Esophagus muscularis mucosa (tissue), 4 donors: ENCODE measurements at regions of chr1 and their contacts with region 1.

Region 1: GRCh38 chr1:9494929-9495758 is 44.1 kb upstream of the SLC25A33 start:
- DNase-seq: no peak
- H3K4me3 ChIP-seq: peak overlapping the region; percentile 40 to 55 (median 44)
- H3K27ac ChIP-seq: no peak overlapping the region
- H3K4me1 ChIP-seq: peaks cover 6 to 14% (median 9%) of the 10 kb centered on the region in 4 donors
- H3K27me3 ChIP-seq: no peaks in the 10 kb centered on the region
- CTCF ChIP-seq: peak; percentile 95 to 99 (median 99)
- EP300 ChIP-seq: no peak
- POLR2A ChIP-seq: no peak

Region 2: GRCh38 chr1:9267352-9267686 is 227.8 kb before region 1 on chr1:
- intact Hi-C with region 1: loop called (anchors 1 kb)
- DNase-seq: no peak
- H3K4me3 ChIP-seq: no peak overlapping the region
- H3K27ac ChIP-seq: peak overlapping the region; percentile 55 to 78 (median 65)
- H3K4me1 ChIP-seq: peaks cover 23 to 32% (median 30%) of the 10 kb centered on the region in 4 donors
- H3K27me3 ChIP-seq: no peaks in the 10 kb centered on the region
- CTCF ChIP-seq: no peak
- EP300 ChIP-seq: no peak
- POLR2A ChIP-seq: no peak

Region 3: GRCh38 chr1:9573723-9574122 is 78.6 kb after region 1 on chr1:
- intact Hi-C with region 1: loop called (anchors 1 kb)
- DNase-seq: no peak
- H3K4me3 ChIP-seq: no peak overlapping the region
- H3K27ac ChIP-seq: no peak overlapping the region
- H3K4me1 ChIP-seq: peaks cover 0 to 3% (median 0%) of the 10 kb centered on the region in 4 donors
- H3K27me3 ChIP-seq: no peaks in the 10 kb centered on the region
- CTCF ChIP-seq: peak; percentile 29 to 40 (median 36)
- EP300 ChIP-seq: no peak
- POLR2A ChIP-seq: no peak

Region 4: GRCh38 chr1:9942939-9943788 is 448.0 kb after region 1 on chr1 and contains the starts of genes LZIC and NMNAT1:
- intact Hi-C with region 1: no loop called
- DNase-seq: peak; percentile 98
- H3K4me3 ChIP-seq: peak within 1 kb of the TSS; percentile 72 to 93 (median 78)
- H3K27ac ChIP-seq: peak within 1 kb of the TSS; percentile 85 to 93 (median 92)
- H3K4me1 ChIP-seq: peaks cover 15 to 41% (median 23%) of the 10 kb centered on the region in 4 donors
- H3K27me3 ChIP-seq: no peaks in the 10 kb centered on the region
- CTCF ChIP-seq: peak in 2 of 3 experiments; percentile 15 to 35
- EP300 ChIP-seq: no peak
- POLR2A ChIP-seq: peak; percentile 62
- total RNA-seq, gene LZIC: 25.4 to 30.6 (median 27.7) TPM
- total RNA-seq, gene NMNAT1: 5.0 to 9.8 (median 7.4) TPM